ENCODE measurements at regions of chr19 and their contacts with region 1.

Region 1: DNA sequence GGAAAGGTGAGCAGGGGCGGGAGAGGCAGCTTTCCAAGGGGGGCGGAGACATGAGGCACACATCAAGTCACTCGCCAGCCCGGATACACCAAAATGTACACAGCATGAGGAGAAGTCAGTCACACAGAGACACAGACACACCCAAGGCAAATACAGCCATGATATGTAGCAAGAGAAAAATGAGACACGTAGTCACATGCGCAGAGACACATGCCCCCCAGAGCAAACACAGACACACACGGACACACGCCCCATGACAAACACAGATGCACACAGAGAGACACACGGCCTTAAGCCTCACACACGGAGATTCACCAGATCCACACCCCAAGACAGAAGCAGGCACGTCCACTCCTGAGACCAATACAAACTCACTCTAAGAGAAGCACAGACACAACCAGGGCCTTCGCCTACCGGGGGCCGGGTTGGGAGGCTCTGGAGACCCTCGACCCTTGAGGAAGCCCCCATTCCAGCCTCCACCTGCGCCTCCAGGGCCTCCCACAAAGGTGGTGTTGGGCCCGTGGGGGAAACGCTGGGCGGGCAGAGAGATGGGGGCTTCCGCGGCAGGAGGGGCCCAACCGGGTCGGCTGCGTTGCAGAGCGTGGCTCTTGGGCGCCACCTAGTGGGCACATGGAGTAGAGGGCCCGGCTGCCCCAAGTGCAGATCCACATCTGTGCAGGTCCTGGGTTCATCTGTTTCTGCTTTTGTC is 10.2 kb upstream of the TINCR start:
- DNase-seq: peak; percentile 51
- H3K4me3 Mint-ChIP-seq: no peak overlapping the region
- H3K27ac Mint-ChIP-seq: no peak overlapping the region
- H3K4me1 Mint-ChIP-seq: peaks cover 10% of the 10 kb centered on the region
- H3K27me3 Mint-ChIP-seq: no peaks in the 10 kb centered on the region

Region 2: DNA sequence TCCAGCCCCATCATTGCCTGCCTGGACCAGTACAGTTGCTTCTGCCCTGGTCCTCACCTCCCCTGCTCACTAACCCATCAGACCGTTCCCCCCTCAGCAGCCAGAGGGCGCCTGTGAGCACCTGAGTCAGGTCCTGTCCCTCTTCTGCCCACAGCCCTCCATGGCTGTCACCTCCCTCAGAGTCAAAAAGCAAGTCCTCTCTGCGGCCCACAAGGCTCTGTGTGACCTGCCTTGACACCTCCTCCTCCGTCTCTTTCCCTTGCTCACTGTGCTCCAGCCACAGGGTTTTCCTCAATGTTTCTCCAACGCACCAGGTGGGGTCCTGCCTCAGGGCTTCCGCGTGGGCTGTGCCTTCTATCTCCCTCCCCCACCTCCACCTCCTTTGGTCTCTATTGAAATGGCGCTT is 208.0 kb before region 1 on chr19:
- intact Hi-C with region 1: loop called (anchors 1 kb)
- DNase-seq: peak; percentile 11
- H3K4me3 Mint-ChIP-seq: no peak overlapping the region
- H3K27ac Mint-ChIP-seq: no peak overlapping the region
- H3K4me1 Mint-ChIP-seq: no peaks in the 10 kb centered on the region
- H3K27me3 Mint-ChIP-seq: no peaks in the 10 kb centered on the region

Region 3: GRCh38 chr19:6402837-6403608 is 825.1 kb after region 1 on chr19:
- intact Hi-C with region 1: no loop called
- DNase-seq: no peak
- H3K4me3 Mint-ChIP-seq: no peak overlapping the region
- H3K27ac Mint-ChIP-seq: no peak overlapping the region
- H3K4me1 Mint-ChIP-seq: no peaks in the 10 kb centered on the region
- H3K27me3 Mint-ChIP-seq: peaks cover 3% of the 10 kb centered on the region